B cell (primary cell): ENCODE measurements at regions of chr1 and their contacts with region 1.

Region 1: DNA sequence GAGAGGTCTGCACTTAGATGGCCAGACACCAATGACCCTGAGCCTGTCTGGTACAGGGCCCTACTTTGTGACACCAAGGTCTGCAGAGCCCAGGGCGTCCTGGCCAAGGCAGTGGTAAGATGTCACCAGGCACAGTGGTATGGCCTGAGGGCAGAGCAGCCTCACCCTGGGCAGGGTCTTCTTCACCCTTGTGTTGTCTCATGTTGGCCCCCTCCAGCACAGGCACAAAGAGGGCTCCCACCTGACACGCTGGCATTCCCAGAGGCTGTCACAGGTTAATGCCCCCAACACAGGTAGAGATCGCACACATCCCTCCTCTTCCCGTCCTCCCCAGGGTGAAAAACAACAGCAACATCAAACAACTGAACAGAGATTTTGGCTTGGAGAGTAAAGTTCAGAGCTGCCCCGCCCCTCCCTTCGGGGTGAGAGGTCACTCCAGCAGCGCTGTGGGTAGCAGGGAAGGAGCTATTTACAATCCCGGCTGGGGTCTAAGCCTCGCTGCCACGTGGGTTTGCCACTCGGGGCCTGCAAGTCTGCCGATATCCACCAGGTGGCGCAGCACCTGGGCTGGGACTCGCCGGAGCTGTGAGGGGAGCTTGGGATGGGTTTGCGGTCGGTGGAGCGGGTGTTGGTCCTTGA is 12.6 kb downstream of the EFNA3 start:
- DNase-seq: peak; percentile 86
- ATAC-seq: peak; percentile 91
- H3K4me3 ChIP-seq: no peak overlapping the region
- H3K4me3 Mint-ChIP-seq: no peak overlapping the region
- H3K27ac ChIP-seq: no peak overlapping the region
- H3K27ac Mint-ChIP-seq: no peak overlapping the region
- H3K4me1 ChIP-seq: peaks cover 13 to 17% of the 10 kb centered on the region in 2 donors
- H3K4me1 Mint-ChIP-seq: peaks cover 8% of the 10 kb centered on the region
- H3K27me3 ChIP-seq: peaks cover 0 to 6% (median 1%) of the 10 kb centered on the region in 4 experiments
- H3K27me3 Mint-ChIP-seq: peaks cover 12% of the 10 kb centered on the region
- CTCF ChIP-seq: peak; percentile 97

Region 2: GRCh38 chr1:155070721-155071569 is 20.2 kb before region 1 on chr1:
- CTCF ChIA-PET with region 1: interaction called, 184 read pairs
- POLR2A ChIA-PET with region 1: no interaction called
- intact Hi-C with region 1: no loop called
- DNase-seq: peak; percentile 91
- ATAC-seq: peak; percentile 98
- H3K4me3 ChIP-seq: peak overlapping the region; percentile 21 to 54 (median 34)
- H3K4me3 Mint-ChIP-seq: peak overlapping the region; percentile 51
- H3K27ac ChIP-seq: peak overlapping the region; percentile 32 to 38
- H3K27ac Mint-ChIP-seq: peak overlapping the region; percentile 48
- H3K4me1 ChIP-seq: peaks cover 25 to 45% of the 10 kb centered on the region in 2 donors
- H3K4me1 Mint-ChIP-seq: peaks cover 48% of the 10 kb centered on the region
- H3K27me3 ChIP-seq: no peaks in the 10 kb centered on the region
- H3K27me3 Mint-ChIP-seq: no peaks in the 10 kb centered on the region
- CTCF ChIP-seq: peak; percentile 75

Region 3: DNA sequence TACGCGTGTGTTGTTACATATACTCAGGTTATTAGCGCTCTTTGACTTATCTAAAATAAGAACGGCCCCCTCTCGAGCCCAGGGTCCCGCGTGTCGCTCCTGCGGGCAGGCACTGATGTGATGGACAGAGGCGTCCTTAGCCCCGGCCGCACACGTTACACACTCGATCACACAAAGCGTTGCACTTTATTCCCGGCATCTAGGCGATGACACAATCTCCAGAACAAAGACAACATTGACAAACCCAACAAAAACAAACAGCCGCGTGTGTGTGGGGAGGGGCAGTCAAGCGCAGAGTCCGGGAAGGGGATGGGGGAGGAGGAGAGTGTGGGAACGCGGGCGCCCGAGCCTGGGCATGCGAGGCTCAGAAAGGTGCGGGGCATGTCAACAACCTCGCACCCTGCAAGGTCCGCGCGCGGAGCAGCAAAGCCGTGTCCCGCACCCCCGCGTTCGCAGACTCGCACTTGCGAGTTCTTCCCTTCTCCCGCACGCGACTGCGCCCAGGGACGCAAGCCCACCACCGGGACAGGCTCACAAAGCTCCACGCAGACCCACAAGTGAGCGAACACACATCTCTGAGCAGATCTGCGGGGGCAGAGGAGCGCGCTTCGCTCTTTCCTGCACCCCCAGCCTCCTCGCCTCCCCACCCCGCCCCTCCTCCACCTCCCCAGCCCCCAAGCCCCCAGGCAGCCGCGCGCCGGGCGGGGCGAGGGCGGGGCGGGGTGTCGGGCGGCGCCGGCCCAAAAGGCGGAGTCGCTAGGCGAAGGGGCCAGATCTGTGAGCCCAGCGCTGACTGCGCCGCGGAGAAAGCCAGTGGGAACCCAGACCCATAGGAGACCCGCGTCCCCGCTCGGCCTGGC is 36.1 kb after region 1 on chr1 and contains the start of gene EFNA1:
- CTCF ChIA-PET with region 1: interaction called, 15 read pairs
- POLR2A ChIA-PET with region 1: no interaction called
- intact Hi-C with region 1: loop called (anchors 5 kb)
- DNase-seq: peak; percentile 53
- ATAC-seq: peak; percentile 77
- H3K4me3 ChIP-seq: peak within 1 kb of the TSS; percentile 32 to 58 (median 49)
- H3K4me3 Mint-ChIP-seq: peak within 1 kb of the TSS; percentile 93
- H3K27ac ChIP-seq: no peak within 1 kb of the TSS
- H3K27ac Mint-ChIP-seq: peak within 1 kb of the TSS; percentile 78
- H3K4me1 ChIP-seq: peaks cover 34 to 36% of the 10 kb centered on the region in 2 donors
- H3K4me1 Mint-ChIP-seq: peaks cover 34% of the 10 kb centered on the region
- H3K27me3 ChIP-seq: peaks cover 0 to 54% (median 27%) of the 10 kb centered on the region in 4 experiments
- H3K27me3 Mint-ChIP-seq: peaks cover 52% of the 10 kb centered on the region
- CTCF ChIP-seq: no peak
- total RNA-seq, gene EFNA1: 0.56 TPM in 1 of 2 replicates, not detected in the other

Region 4: GRCh38 chr1:155145491-155145890 is 54.3 kb after region 1 on chr1:
- CTCF ChIA-PET with region 1: interaction called, 19 read pairs
- POLR2A ChIA-PET with region 1: interaction called, 6 read pairs
- intact Hi-C with region 1: no loop called
- DNase-seq: no peak
- ATAC-seq: no peak
- H3K4me3 ChIP-seq: no peak overlapping the region
- H3K4me3 Mint-ChIP-seq: no peak overlapping the region
- H3K27ac ChIP-seq: no peak overlapping the region
- H3K27ac Mint-ChIP-seq: no peak overlapping the region
- H3K4me1 ChIP-seq: peaks cover 13 to 17% of the 10 kb centered on the region in 2 donors
- H3K4me1 Mint-ChIP-seq: peaks cover 20% of the 10 kb centered on the region
- H3K27me3 ChIP-seq: no peaks in the 10 kb centered on the region
- H3K27me3 Mint-ChIP-seq: no peaks in the 10 kb centered on the region
- CTCF ChIP-seq: no peak

Region 5: DNA sequence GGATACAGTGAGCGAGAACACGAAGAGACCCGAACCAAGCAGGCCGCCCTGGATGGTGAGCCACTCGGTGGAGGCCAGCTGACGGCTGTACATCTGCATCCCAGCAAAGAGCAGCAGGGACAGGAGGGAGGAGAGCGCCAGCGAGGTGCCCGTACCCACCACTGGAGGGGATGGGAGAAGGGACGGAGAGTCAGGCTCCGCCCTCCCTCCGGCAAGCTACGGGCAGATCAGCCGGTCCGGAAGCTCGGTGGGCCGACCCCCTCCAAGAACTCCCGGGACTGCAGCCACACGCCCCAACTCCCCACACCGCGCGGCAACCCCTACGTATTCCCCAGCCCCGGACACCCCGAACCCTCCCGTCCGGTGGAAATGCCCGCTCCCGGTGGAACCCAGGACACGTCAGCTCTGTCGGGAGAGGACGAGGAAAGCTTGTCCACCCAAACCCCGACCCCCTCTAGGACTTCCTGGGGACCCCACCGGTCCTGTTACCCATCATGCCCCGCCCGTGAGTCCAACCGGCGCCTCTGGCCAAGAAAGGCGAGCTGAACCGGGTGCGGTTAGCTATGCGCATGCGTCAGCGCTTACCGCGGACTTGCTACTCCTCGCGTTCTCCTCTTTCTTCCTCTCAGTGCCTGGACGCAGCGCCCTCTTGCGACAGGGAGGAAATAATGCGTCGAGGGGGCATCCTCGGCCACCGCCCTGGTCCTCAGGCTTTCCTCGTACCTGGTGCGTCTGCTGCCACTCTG is 81.7 kb after region 1 on chr1 and contains the start of gene KRTCAP2:
- CTCF ChIA-PET with region 1: interaction called, 307 read pairs
- POLR2A ChIA-PET with region 1: interaction called, 9 read pairs
- intact Hi-C with region 1: no loop called
- DNase-seq: peak; percentile 95
- ATAC-seq: peak; percentile 85
- H3K4me3 ChIP-seq: peak within 1 kb of the TSS; percentile 27 to 95 (median 73)
- H3K4me3 Mint-ChIP-seq: peak within 1 kb of the TSS; percentile 97
- H3K27ac ChIP-seq: peak within 1 kb of the TSS; percentile 89 to 92
- H3K27ac Mint-ChIP-seq: peak within 1 kb of the TSS; percentile 98
- H3K4me1 ChIP-seq: peaks cover 24 to 35% of the 10 kb centered on the region in 2 donors
- H3K4me1 Mint-ChIP-seq: peaks cover 40% of the 10 kb centered on the region
- H3K27me3 ChIP-seq: no peaks in the 10 kb centered on the region
- H3K27me3 Mint-ChIP-seq: no peaks in the 10 kb centered on the region
- CTCF ChIP-seq: peak; percentile 89
- total RNA-seq, gene KRTCAP2: 136 and 151 TPM in 2 replicates

Region 6: DNA sequence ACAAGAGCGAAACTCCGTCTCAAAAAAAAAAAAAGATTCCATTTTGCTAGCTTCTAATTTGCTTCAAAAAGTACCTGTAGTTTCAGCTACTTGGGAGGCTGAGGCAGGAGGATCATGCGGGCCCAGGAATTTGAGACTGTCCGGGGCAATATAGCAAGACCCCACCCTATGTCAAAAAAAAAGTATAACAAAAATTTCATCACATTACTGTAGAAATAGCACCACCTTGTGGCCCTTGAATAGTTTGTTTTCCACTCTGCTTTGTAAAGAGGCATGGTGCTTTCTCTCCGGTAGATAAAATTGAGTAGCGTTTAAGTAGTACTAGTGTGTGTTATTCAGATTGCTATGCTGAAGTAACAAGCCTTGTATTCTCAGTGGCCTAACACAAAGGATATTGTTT is 500.6 kb after region 1 on chr1:
- CTCF ChIA-PET with region 1: interaction called, 5 read pairs
- POLR2A ChIA-PET with region 1: no interaction called
- intact Hi-C with region 1: loop called (anchors 5 kb)
- DNase-seq: peak; percentile 74
- ATAC-seq: peak; percentile 60
- H3K4me3 ChIP-seq: no peak overlapping the region
- H3K4me3 Mint-ChIP-seq: no peak overlapping the region
- H3K27ac ChIP-seq: no peak overlapping the region
- H3K27ac Mint-ChIP-seq: no peak overlapping the region
- H3K4me1 ChIP-seq: no peaks in the 10 kb centered on the region
- H3K4me1 Mint-ChIP-seq: no peaks in the 10 kb centered on the region
- H3K27me3 ChIP-seq: no peaks in the 10 kb centered on the region
- H3K27me3 Mint-ChIP-seq: no peaks in the 10 kb centered on the region
- CTCF ChIP-seq: peak; percentile 75

Region 7: DNA sequence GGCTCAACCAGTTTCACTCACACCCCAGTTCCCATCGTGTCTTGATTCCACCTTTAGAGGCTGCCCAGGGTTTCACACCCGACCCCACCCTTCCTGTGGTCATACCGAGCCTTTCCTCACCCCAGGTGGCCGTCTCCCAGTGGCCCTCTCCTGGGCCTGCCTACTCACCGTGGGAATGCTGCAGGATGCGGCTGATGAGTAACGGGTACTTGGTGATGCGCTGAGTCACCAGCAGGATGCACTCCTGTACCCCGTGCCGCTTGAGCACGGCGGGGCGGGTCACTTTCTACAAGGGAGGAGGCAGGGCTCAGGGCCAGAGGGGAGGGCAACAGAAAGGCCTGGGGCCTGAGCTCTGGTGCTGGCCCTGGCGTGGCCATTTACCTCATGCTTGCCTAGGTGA is 870.7 kb after region 1 on chr1:
- CTCF ChIA-PET with region 1: no interaction called
- POLR2A ChIA-PET with region 1: no interaction called
- intact Hi-C with region 1: no loop called
- DNase-seq: no peak
- ATAC-seq: no peak
- H3K4me3 ChIP-seq: no peak overlapping the region
- H3K4me3 Mint-ChIP-seq: peak overlapping the region; percentile 59
- H3K27ac ChIP-seq: peak overlapping the region; percentile 28 to 69
- H3K27ac Mint-ChIP-seq: peak overlapping the region; percentile 82
- H3K4me1 ChIP-seq: peaks cover 41 to 68% of the 10 kb centered on the region in 2 donors
- H3K4me1 Mint-ChIP-seq: peaks cover 66% of the 10 kb centered on the region
- H3K27me3 ChIP-seq: no peaks in the 10 kb centered on the region
- H3K27me3 Mint-ChIP-seq: no peaks in the 10 kb centered on the region
- CTCF ChIP-seq: no peak